ENCODE measurements at regions of chr12 and their contacts with region 1.

Region 1: GRCh38 chr12:53675651-53676453 is at the start of gene ATP5MC2:
- DNase-seq: peak; percentile 98
- ATAC-seq: peak; percentile 97
- total RNA-seq, gene ATP5MC2: 148 TPM

Region 2: DNA sequence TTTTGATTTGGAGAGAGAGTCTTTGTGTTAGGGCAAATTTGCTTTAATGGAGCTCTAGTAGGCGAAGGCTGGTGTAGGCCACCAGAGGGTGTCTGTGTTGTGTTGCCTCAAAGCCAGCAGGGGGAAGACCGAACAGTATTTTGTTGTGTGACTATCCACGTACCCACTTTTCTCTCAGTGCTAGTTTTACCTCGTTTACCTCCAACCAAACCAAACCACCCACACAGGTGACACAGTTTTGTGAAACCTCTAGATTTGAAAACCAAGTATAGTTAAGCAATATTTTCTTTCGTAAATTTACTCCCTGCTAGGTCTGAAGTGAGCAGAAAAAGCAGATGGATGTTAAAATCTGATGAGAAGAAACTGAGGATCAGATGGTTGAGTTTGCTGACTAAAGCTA is 132.3 kb before region 1 on chr12:
- intact Hi-C with region 1: loop called (anchors 10 kb)
- DNase-seq: no peak
- ATAC-seq: peak; percentile 90

Region 3: DNA sequence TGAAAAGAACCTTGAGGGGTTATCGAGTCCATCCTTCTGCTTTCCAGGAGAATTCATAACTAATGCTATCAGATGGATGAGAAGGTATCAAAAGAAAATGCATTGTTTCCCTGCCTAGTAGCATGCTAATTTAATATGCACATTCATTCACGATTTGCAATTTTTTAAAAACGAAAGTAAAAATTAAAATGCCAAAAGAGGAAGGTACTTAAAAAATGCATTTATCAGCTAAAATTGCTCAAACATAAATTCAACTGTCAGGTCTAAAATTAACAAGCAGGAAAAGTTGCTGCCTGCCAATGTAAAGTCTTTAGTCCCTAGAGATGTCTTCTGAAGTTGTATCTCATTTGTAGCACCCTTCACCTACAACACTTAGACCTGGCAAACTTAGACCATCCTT is 57.6 kb before region 1 on chr12:
- intact Hi-C with region 1: no loop called
- DNase-seq: no peak
- ATAC-seq: no peak